Esophagus muscularis mucosa (tissue), 4 donors: ENCODE measurements at regions of chr14 and their contacts with region 1.

Region 1: DNA sequence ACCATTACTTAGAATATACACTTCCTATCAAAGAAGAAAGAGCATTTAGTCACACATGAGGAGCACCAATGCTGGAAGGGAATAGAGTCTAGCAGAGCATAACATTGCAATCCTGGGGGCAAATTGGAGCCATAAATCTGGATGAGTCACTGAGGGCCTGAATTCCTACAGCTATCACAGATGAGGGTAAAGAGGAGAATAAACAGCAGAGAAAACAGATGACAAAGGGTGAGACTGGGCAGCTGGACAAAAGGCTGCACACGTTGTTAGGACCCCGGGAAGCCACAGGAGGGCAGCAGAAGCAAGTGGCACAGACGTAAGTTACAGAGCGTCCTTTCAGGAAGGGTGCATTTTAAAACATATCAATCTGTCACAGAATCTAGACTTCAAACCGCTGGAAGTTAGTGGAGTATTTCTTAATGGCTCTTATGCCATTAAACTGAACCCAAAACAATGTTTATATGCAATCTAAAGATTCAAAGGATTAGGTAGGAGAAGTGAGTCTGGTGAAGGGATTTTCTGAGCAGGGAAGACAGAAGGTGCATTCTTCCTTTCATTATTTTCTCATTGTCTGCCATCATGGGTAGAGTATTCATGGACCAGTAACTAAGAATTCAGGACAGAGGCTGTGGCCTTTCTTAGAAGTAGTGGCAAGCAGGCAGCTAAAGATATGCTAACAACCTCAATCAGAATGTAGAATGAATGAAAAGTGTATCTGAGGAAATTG is 159.8 kb upstream of the DAAM1 start:
- DNase-seq: no peak
- H3K4me3 ChIP-seq: no peak overlapping the region
- H3K27ac ChIP-seq: no peak overlapping the region
- H3K4me1 ChIP-seq: peaks cover 0 to 7% (median 3%) of the 10 kb centered on the region in 4 donors
- H3K27me3 ChIP-seq: no peaks in the 10 kb centered on the region
- CTCF ChIP-seq: peak; percentile 75 to 84 (median 77)
- EP300 ChIP-seq: no peak
- POLR2A ChIP-seq: no peak

Region 2: GRCh38 chr14:58376791-58377190 is 651.8 kb before region 1 on chr14:
- intact Hi-C with region 1: no loop called
- DNase-seq: no peak
- H3K4me3 ChIP-seq: no peak overlapping the region
- H3K27ac ChIP-seq: no peak overlapping the region
- H3K4me1 ChIP-seq: no peaks in the 10 kb centered on the region
- H3K27me3 ChIP-seq: no peaks in the 10 kb centered on the region
- CTCF ChIP-seq: no peak
- EP300 ChIP-seq: no peak
- POLR2A ChIP-seq: no peak

Region 3: GRCh38 chr14:59055439-59056045 is 26.9 kb after region 1 on chr14:
- intact Hi-C with region 1: no loop called
- DNase-seq: no peak
- H3K4me3 ChIP-seq: no peak overlapping the region
- H3K27ac ChIP-seq: no peak overlapping the region
- H3K4me1 ChIP-seq: no peaks in the 10 kb centered on the region
- H3K27me3 ChIP-seq: no peaks in the 10 kb centered on the region
- CTCF ChIP-seq: peak; percentile 66 to 73 (median 69)
- EP300 ChIP-seq: no peak
- POLR2A ChIP-seq: no peak

Region 4: DNA sequence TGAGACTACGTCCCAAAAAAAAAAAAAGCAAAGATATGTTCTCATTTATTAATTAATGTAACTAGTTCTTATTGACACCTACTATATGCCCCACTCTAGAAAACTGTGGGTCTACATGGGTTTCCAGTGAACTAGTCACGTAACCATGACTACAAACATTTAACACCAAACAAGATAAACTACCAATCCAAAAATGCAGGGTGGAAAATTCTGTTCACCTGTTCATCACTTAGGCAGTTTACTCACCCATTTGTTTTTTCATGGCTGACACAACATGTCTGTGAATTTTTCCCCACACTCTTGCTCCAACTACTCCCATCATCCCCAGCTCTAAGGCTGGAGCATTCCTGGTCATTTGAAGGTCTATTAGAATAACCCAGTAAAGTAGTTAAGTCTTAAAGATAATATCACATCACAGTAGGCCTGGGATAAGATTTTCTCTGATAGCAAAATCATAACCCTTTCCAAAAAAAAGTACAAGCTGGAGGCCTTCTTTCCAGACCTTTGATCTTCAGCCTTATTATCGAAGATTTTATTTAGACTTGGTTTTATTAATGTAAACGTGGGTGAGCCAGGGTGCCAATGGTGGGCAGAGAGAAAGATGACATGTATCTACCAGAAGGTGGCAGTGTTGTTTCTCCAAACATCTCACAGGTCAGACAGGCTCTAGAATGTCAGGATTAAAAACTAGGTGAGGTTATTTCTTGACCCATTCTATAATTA is 98.2 kb after region 1 on chr14:
- intact Hi-C with region 1: loop called (anchors 2 kb)
- DNase-seq: no peak
- H3K4me3 ChIP-seq: no peak overlapping the region
- H3K27ac ChIP-seq: no peak overlapping the region
- H3K4me1 ChIP-seq: peaks cover 0 to 14% (median 11%) of the 10 kb centered on the region in 4 donors
- H3K27me3 ChIP-seq: no peaks in the 10 kb centered on the region
- CTCF ChIP-seq: peak; percentile 81 to 89 (median 83)
- EP300 ChIP-seq: no peak
- POLR2A ChIP-seq: no peak

Region 5: DNA sequence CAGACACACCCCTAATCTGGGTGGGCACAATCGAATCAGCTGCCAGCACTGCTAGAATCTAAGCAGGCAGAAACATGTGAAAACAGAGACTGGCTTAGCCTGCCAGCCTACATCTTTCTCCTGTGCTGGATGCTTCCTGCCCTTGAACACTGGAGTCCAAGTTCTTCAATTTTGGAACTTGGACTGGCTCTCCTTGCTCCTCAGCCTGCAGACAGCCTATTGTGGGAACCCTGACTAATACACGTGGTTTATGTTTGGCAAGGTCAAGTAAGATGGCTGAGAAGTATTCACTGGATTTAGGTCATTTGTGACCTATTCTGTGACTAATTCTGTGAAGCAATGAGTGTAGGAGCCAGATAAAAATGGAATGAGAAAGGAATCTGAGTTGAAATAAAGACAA is 425.5 kb after region 1 on chr14:
- intact Hi-C with region 1: loop called (anchors 10 kb)
- DNase-seq: no peak
- H3K4me3 ChIP-seq: no peak overlapping the region
- H3K27ac ChIP-seq: peak overlapping the region in 2 of 4 donors; percentile 11 to 38
- H3K4me1 ChIP-seq: peaks cover 0 to 8% (median 0%) of the 10 kb centered on the region in 4 donors
- H3K27me3 ChIP-seq: no peaks in the 10 kb centered on the region
- CTCF ChIP-seq: no peak
- EP300 ChIP-seq: no peak
- POLR2A ChIP-seq: no peak